ENCODE measurements at regions of chr7 and their contacts with region 1.

Region 1: DNA sequence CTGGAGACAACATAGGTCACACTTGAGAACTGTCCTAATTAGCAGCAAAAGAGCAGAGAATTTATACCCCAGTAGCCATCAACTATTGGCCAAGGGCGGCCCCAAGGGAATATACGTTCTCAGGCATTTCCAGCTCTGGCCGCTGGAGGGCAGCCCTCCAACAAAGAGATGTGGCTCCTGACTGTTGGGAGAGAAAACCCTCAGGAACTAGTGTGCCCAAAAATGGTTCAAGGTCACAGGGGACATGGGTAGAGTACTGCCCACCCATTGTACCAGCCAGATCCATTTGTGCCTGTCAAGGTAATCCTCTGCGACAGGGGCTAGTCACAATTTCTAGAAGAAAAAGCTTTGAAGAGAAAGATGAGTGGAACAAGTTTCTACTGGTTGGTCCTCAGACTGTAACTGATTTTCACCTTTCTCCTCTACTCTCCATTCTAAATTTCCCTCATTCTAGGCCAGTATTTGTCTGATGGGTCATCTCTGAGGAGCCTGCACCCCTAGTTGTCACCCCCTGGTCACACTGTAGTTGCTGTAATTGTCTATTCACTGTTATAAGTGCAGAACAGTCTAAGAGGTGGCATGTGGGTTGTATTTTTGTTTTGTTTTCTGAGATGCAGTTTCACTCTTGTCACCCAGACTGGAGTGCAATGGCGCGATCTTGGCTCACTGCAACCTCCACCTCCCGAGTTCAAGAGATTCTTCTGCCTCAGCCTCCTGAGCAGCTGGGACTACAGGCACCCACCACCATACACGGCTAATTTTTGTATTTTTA is 14.7 kb upstream of the C7orf33 start:
- DNase-seq: peak; percentile 76
- H3K4me3 Mint-ChIP-seq: no peak overlapping the region
- H3K27ac Mint-ChIP-seq: no peak overlapping the region
- H3K4me1 Mint-ChIP-seq: no peaks in the 10 kb centered on the region
- H3K27me3 Mint-ChIP-seq: no peaks in the 10 kb centered on the region
- CTCF ChIP-seq: peak; percentile 87

Region 2: GRCh38 chr7:148547951-148548350 is 27.9 kb before region 1 on chr7:
- CTCF ChIA-PET with region 1: interaction called, 12 read pairs
- POLR2A ChIA-PET with region 1: interaction called, 3 read pairs
- intact Hi-C with region 1: no loop called
- DNase-seq: no peak
- H3K4me3 Mint-ChIP-seq: no peak overlapping the region
- H3K27ac Mint-ChIP-seq: no peak overlapping the region
- H3K4me1 Mint-ChIP-seq: no peaks in the 10 kb centered on the region
- H3K27me3 Mint-ChIP-seq: no peaks in the 10 kb centered on the region
- CTCF ChIP-seq: no peak

Region 3: DNA sequence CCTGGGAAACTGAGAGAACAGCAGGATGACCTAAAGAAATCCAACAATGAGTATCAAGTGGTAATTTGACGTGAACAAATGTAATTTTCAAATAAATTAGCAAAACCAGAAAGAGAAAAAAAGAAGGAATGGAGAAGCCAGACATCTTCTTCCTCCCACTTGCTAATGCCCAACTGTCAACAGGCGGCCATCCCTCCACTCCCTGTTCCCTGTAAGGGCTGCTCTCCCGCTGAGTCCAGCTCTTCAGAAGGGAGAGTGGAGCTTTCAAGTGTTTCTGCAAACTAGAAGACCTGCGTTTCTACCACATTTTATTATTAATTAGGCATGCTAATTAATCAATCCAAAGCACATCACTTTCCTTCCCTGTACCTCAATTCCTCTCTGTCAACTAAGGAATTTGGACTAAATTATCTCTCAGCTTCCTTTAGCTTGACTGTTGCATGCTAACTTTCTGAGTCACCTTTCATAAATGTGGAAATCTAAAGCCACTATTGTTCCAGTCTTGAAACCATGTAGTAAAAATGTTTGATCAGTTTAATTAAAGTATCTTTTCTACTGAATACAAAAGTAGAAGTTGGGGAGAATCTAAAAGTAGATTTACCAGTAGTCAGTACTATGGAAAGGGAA is 74.5 kb after region 1 on chr7:
- CTCF ChIA-PET with region 1: interaction called, 12 read pairs
- POLR2A ChIA-PET with region 1: no interaction called
- intact Hi-C with region 1: no loop called
- DNase-seq: no peak
- H3K4me3 Mint-ChIP-seq: no peak overlapping the region
- H3K27ac Mint-ChIP-seq: peak overlapping the region; percentile 39
- H3K4me1 Mint-ChIP-seq: peaks cover 9% of the 10 kb centered on the region
- H3K27me3 Mint-ChIP-seq: no peaks in the 10 kb centered on the region
- CTCF ChIP-seq: no peak

Region 4: GRCh38 chr7:148684289-148684830 is 108.5 kb after region 1 on chr7:
- CTCF ChIA-PET with region 1: no interaction called
- POLR2A ChIA-PET with region 1: no interaction called
- intact Hi-C with region 1: no loop called
- DNase-seq: no peak
- H3K4me3 Mint-ChIP-seq: no peak overlapping the region
- H3K27ac Mint-ChIP-seq: no peak overlapping the region
- H3K4me1 Mint-ChIP-seq: no peaks in the 10 kb centered on the region
- H3K27me3 Mint-ChIP-seq: peaks cover 15% of the 10 kb centered on the region
- CTCF ChIP-seq: no peak

Region 5: GRCh38 chr7:148773334-148773733 is 197.5 kb after region 1 on chr7:
- CTCF ChIA-PET with region 1: interaction called, 7 read pairs
- POLR2A ChIA-PET with region 1: no interaction called
- intact Hi-C with region 1: loop called (anchors 10 kb)
- DNase-seq: no peak
- H3K4me3 Mint-ChIP-seq: no peak overlapping the region
- H3K27ac Mint-ChIP-seq: peak overlapping the region; percentile 62
- H3K4me1 Mint-ChIP-seq: peaks cover 16% of the 10 kb centered on the region
- H3K27me3 Mint-ChIP-seq: no peaks in the 10 kb centered on the region
- CTCF ChIP-seq: no peak

Measured in MCF 10A (cell line).